Cardiac septum (tissue), 1 donor: ENCODE measurements at regions of chr20 and their contacts with region 1.

Region 1: DNA sequence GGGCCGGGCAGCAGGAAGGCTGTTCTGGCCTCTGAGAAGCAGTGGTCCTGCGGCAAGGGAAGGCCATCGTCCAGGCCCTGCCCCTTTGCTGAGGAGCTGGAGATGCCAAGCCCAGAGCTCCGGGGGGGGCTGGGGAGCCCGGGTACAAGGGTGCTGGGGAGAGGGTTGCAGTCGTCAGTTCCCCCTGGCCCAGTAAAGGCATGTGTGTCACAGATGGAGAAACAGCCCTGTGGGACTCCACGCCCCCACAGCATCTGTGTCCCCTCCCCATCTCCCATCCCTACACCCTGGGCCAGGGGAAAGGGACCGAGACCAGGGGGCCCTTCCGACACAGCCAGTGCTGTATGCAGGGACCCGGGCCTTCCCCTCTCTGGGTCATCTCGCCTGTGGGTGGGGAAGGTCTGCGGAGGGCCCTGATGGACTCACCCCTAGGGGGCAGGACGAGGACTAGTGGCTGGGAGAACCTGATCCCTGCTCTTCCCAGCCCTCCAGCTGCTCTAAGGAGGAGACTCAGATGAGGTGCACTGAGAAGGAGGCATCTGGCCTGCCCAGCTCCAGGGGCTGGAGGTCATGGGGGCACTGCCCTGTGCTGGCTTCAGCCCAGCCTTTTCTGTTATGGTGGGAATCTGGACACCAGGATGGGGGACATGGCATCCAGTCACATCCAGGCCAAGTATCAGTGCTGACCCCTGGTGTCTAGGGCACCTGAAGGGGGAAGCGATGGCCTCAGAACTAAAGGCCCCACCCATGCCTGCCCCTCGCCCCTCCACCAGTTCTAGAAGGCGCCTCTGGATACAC is 644 bp downstream of the MYL9 start:
- DNase-seq: no peak

Region 2: GRCh38 chr20:36399147-36399968 is 142.6 kb before region 1 on chr20:
- intact Hi-C with region 1: no loop called
- DNase-seq: no peak

Region 3: DNA sequence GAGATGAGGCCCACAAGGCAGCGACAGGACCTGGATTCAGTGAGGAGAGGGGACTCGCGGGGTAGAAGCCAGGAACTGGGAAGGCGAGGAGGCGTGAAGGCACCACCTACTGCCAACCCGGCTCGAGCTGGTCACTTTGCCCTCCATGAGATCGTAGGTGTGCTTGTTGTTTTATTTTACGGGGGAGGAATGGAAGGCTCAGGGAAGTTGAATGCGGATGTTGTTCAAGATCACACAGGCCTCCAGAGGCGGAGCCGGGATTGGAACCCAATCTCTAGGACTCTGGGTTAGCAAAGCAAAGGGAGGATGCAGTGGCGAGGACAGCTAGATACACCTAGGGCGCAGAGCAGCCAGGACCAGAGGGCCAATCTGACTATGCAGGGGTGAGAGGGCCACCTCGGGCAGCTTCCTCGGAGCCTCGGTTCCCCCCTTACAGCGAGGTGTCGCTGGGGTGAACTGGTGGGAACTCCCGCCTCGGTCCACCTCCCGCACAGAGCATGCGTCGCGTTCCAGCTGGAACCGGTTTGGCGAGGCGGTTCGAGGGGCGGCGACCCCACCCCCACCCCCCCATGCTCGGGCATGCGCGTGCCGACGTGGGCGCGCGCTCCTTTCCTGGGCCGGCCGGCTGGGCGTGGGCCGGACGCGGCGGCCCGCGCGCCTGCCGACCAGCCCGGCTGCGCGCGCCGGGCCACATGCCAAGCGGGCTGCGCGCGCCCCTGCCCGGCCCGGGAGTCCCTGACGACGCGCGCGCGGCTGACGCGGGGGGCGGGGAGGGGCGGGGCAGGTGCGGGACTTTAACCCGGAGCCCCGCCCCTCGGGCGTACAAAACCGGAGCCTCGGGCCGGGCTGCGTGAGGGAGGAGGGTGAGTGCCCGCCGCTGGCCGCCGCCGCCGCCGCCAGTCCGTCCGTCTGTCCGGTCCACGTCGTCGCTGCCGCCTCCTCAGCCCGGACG is 81.0 kb before region 1 on chr20:
- intact Hi-C with region 1: loop called (anchors 1 kb)
- DNase-seq: peak; percentile 95

Region 4: GRCh38 chr20:36481381-36482043 is 60.5 kb before region 1 on chr20:
- intact Hi-C with region 1: loop called (anchors 5 kb)
- DNase-seq: no peak

Region 5: GRCh38 chr20:36499723-36500501 is 42.1 kb before region 1 on chr20:
- intact Hi-C with region 1: loop called (anchors 1 kb)
- DNase-seq: no peak